ENCODE measurements at regions of chr2 and their contacts with region 1.

Region 1: DNA sequence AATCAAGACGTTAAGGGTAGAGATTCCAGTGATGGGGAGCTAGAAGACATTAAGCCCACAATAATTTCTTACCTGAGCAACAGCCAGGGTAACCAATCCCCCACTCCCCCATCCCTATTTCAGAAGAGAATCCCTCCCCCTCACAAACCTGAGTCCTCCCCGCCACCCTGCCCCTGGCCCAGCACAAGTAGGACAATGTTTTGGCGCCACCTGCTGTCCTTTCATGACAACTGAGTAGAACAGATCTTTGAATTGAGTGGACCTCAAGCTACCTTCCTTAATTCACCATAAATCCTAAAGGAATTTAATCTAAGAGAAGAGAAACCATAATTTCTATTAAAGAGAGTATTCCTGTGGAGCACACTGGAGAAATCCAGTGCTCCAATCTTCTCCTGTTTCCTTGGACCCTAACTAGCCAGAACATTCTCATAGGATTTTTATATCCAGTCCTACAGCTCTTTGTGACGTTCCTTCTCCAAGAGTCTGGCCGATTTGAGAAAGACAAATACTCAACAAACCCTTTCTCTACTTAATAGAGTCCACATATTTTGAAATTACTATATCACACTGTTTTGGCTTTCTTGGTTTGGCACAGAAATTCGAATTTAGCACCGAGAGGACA is 41.1 kb downstream of the NHEJ1 start:
- DNase-seq: peak in 1 of 2 experiments; percentile 46
- H3K4me3 ChIP-seq: no peak overlapping the region
- H3K27ac ChIP-seq: no peak overlapping the region
- H3K4me1 ChIP-seq: peaks cover 15% of the 10 kb centered on the region
- H3K27me3 ChIP-seq: no peaks in the 10 kb centered on the region
- CTCF ChIP-seq: peak; percentile 87

Region 2: DNA sequence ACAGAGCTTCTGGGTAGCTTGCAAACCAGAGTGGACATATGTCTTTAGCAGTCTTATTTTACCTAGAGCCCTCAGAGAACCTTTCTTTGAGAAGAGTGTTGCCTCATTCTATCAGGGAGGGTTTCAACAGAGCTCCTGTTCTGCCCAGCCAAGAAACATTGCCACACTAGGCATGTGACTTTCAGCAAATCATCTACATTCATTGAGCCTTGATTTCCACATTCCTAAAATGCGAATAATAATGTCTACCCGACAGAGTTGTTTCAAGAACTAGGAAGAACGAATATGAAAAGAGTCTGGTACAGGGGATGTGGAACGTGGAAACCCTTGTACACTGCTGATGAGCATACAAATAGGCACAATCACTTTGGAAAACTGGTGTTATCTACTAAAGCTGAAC is 280.1 kb before region 1 on chr2:
- CTCF ChIA-PET with region 1: no interaction called
- POLR2A ChIA-PET with region 1: no interaction called
- intact Hi-C with region 1: no loop called
- DNase-seq: peak in 1 of 2 experiments; percentile 61
- H3K4me3 ChIP-seq: no peak overlapping the region
- H3K27ac ChIP-seq: no peak overlapping the region
- H3K4me1 ChIP-seq: peaks cover 34% of the 10 kb centered on the region
- H3K27me3 ChIP-seq: no peaks in the 10 kb centered on the region
- CTCF ChIP-seq: no peak

Region 3: GRCh38 chr2:219029829-219030165 is 89.7 kb before region 1 on chr2:
- CTCF ChIA-PET with region 1: interaction called, 13 read pairs
- POLR2A ChIA-PET with region 1: no interaction called
- intact Hi-C with region 1: loop called (anchors 1 kb)
- DNase-seq: peak; percentile 58 to 80
- H3K4me3 ChIP-seq: no peak overlapping the region
- H3K27ac ChIP-seq: no peak overlapping the region
- H3K4me1 ChIP-seq: no peaks in the 10 kb centered on the region
- H3K27me3 ChIP-seq: peaks cover 68% of the 10 kb centered on the region; the same call in 1 of the 2 replicates
- CTCF ChIP-seq: peak; percentile 93

Region 4: GRCh38 chr2:219073413-219074129 is 46.0 kb before region 1 on chr2:
- CTCF ChIA-PET with region 1: interaction called, 3 read pairs
- POLR2A ChIA-PET with region 1: no interaction called
- intact Hi-C with region 1: loop called (anchors 1 kb)
- DNase-seq: no peak
- H3K4me3 ChIP-seq: no peak overlapping the region
- H3K27ac ChIP-seq: no peak overlapping the region
- H3K4me1 ChIP-seq: peaks cover 13% of the 10 kb centered on the region
- H3K27me3 ChIP-seq: no peaks in the 10 kb centered on the region
- CTCF ChIP-seq: peak; percentile 70

Region 5: DNA sequence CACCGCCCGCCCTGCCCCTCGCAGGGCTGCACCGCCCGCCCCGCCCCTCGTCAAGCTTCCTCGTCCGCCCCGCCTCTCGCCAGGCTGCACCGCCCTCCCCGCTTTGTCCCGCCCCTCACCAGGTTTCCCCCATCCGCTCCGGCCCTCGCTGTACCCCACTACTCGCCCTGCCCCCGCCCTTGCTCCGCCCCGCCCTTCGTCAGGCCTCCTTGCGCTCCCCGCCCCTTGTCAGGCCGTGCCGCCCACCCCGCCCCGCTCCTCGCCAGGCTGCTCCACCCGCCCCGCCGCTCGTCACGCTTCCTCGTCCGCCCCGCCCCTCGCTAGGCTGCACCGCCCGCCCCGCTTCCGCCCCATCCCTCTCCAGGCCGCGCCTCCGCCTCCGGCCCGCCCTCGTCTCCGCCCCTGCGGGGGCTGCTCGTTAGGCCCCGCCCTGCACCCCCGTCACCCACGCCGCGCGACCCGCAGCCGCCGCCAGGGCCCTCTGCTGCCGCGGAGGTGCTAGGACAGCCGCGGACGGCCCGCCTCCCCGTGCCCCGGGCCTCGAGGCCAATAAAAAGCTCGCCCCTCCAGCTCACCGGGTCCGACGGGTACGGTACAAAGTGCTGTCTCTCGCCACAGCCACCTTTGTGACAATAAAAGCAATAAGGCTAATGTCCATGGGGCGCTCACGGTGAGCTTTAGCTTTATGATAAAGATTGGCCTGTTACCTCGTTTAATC is 268.8 kb after region 1 on chr2:
- CTCF ChIA-PET with region 1: no interaction called
- POLR2A ChIA-PET with region 1: interaction called, 13 read pairs
- intact Hi-C with region 1: no loop called
- DNase-seq: peak; percentile 71 to 98
- H3K4me3 ChIP-seq: peak overlapping the region; percentile 53
- H3K27ac ChIP-seq: peak overlapping the region; percentile 30
- H3K4me1 ChIP-seq: peaks cover 6% of the 10 kb centered on the region; the same call in 1 of the 2 replicates
- H3K27me3 ChIP-seq: no peaks in the 10 kb centered on the region
- CTCF ChIP-seq: peak; percentile 60